Sigmoid colon (tissue), 7 donors: ENCODE measurements at regions of chr2 and their contacts with region 1.

Region 1: DNA sequence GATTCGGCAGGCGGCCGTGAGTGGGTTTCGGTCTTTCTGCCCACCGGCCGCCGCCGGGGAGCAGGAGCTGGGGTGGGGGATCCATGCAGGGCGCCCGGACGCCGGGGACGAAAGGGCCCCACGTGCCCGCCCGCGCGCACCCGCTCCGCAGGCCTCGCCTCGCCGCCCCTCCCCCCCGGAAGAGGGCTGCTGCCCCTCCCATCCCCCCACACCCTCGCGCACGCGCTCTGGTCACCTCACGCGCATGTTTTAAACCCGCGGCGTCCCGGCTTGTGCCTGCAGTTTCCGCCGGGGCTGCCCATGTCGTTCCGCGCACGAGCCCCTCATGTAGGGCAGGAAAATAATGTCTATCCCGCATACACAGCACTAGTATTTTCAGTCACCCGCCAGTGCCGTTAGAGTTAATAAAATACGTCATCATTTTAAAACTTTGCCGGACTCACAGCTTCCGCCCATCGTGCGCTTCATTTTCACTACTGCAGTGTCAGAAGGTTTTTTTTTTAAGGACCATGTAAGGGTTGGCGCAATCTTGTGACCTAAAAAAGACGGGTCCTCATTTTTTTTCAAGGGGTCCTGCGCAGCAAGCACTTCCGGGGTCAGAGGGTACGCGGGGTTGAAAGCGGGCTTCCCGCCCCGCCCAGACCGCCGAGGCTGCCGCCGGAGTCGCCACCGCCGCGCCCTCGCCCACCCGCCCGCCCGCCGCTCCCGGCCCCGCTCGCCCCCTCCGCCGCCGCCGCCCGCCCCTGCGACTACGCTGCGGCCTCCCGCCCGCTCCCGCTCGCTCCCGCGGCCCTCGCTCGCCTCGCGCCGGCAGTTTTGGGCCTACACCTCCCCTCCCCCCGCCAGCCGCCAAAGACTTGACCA is at the start of gene PCBP1:
- DNase-seq: peak; percentile 98
- H3K4me3 ChIP-seq: peak within 1 kb of the TSS; percentile 63 to 87 (median 72)
- H3K27ac ChIP-seq: peak within 1 kb of the TSS; percentile 99 to 100 (median 99)
- H3K4me1 ChIP-seq: peaks cover 0 to 54% (median 47%) of the 10 kb centered on the region in 4 donors
- H3K27me3 ChIP-seq: no peaks in the 10 kb centered on the region
- CTCF ChIP-seq: no peak
- EP300 ChIP-seq: peak in 2 of 4 donors; percentile 22 to 28
- POLR2A ChIP-seq: peak; percentile 91 to 95
- total RNA-seq, gene PCBP1: 178 to 186 (median 182) TPM

Region 2: DNA sequence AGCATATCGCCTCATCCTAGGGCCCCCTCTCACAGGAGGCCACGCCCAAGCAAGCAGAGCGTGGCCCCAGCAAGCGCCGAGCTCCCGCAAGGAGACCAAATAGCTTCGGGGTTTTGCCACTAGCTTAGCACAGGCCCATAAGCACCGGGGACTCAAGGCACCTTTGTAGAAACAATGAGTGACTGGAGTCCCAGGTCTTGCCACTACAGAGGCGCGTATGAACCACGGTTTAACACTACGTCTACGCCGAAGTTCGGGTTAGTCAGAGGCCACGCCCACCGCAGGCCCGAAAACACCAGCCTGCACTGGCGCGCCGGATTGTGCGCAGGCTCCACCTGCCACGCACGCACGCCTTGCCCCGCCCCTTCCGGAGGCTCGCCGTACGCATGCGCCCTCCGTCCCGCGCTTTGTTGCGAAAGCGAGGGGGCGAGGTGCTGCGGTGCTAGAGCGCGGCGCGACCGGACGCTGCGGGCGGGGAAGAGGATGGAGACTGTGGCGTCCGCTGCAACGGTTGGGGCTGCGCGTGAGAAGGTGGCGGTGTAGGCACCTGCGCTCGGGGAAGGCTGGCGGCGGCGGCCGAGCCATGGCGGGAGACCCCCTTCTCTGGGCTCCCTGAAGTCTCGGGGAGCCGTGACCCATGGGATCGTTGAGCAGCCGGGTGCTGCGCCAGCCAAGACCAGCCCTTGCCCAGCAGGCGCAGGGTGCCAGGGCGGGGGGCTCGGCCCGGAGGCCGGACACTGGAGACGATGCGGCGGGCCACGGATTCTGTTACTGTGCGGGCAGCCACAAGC is 257.6 kb before region 1 on chr2 and contains the start of gene GMCL1:
- intact Hi-C with region 1: loop called (anchors 10 kb)
- DNase-seq: peak; percentile 99
- H3K4me3 ChIP-seq: peak within 1 kb of the TSS; percentile 86 to 94 (median 88)
- H3K27ac ChIP-seq: peak within 1 kb of the TSS; percentile 90 to 95 (median 94)
- H3K4me1 ChIP-seq: peaks cover 0 to 31% (median 23%) of the 10 kb centered on the region in 4 donors
- H3K27me3 ChIP-seq: no peaks in the 10 kb centered on the region
- CTCF ChIP-seq: no peak
- EP300 ChIP-seq: peak in 1 of 4 donors; percentile 40
- POLR2A ChIP-seq: peak; percentile 62 to 68
- total RNA-seq, gene GMCL1: 10.5 to 15.3 (median 12.9) TPM

Region 3: GRCh38 chr2:70043252-70043875 is 43.7 kb before region 1 on chr2:
- intact Hi-C with region 1: no loop called
- DNase-seq: no peak
- H3K4me3 ChIP-seq: no peak overlapping the region
- H3K27ac ChIP-seq: no peak overlapping the region
- H3K4me1 ChIP-seq: no peaks in the 10 kb centered on the region
- H3K27me3 ChIP-seq: no peaks in the 10 kb centered on the region
- CTCF ChIP-seq: no peak
- EP300 ChIP-seq: peak in 2 of 4 donors; percentile 55 to 72
- POLR2A ChIP-seq: no peak

Region 4: GRCh38 chr2:70124983-70125480 is 38.0 kb after region 1 on chr2:
- intact Hi-C with region 1: loop called (anchors 2 kb)
- DNase-seq: peak; percentile 86
- H3K4me3 ChIP-seq: peak overlapping the region; percentile 54 to 65 (median 56)
- H3K27ac ChIP-seq: peak overlapping the region; percentile 94 to 97 (median 96)
- H3K4me1 ChIP-seq: peaks cover 0 to 26% (median 16%) of the 10 kb centered on the region in 4 donors
- H3K27me3 ChIP-seq: no peaks in the 10 kb centered on the region
- CTCF ChIP-seq: no peak
- EP300 ChIP-seq: peak in 1 of 4 donors; percentile 26
- POLR2A ChIP-seq: peak in 1 of 2 donors; percentile 18

Region 5: DNA sequence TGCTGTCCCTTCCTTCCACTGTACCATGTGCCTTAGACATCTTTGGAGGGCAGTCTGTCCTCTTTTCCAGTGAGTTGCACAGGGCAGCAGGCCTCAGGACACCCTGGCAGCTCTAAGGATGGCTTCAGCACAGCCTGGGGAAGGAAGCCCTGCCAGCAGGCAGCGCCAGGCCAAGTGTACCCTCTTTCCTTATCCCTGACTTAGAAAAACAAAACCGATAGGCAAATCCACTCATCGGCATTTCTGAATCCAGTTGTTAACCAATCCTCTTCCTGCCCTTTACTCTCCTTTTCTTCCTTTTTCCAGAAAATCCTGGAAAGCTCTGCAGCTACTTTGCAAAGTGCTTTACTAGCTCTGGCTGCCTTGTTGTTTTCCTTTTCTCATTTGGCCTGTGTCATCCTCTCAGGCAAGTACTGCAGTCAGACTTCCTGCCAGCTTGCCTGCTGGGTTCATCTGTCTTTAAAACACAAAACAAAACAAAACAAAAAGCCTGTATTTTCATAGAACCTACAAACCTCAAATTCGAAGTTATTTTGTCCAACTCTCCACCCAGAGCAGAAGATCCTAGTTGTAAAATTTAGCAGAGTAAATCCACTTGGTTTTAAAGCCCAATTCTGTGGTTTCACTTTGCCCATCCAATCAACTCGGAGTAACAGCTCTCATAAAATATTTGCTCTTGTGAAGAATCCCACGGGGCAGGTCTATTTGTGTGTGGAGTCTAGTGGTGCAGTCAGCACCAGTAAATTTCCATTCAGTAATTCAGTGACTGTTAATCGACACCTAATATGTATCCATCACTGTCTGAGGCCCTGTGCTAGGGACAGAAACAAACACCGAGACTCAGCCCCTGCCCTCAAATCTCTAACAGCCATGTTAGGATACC is 45.4 kb after region 1 on chr2:
- intact Hi-C with region 1: loop called (anchors 2 kb)
- DNase-seq: no peak
- H3K4me3 ChIP-seq: peak overlapping the region; percentile 9 to 40 (median 36)
- H3K27ac ChIP-seq: peak overlapping the region; percentile 84 to 90 (median 89)
- H3K4me1 ChIP-seq: peaks cover 0 to 42% (median 33%) of the 10 kb centered on the region in 4 donors
- H3K27me3 ChIP-seq: no peaks in the 10 kb centered on the region
- CTCF ChIP-seq: no peak
- EP300 ChIP-seq: no peak
- POLR2A ChIP-seq: peak in 1 of 2 donors; percentile 12

Region 6: DNA sequence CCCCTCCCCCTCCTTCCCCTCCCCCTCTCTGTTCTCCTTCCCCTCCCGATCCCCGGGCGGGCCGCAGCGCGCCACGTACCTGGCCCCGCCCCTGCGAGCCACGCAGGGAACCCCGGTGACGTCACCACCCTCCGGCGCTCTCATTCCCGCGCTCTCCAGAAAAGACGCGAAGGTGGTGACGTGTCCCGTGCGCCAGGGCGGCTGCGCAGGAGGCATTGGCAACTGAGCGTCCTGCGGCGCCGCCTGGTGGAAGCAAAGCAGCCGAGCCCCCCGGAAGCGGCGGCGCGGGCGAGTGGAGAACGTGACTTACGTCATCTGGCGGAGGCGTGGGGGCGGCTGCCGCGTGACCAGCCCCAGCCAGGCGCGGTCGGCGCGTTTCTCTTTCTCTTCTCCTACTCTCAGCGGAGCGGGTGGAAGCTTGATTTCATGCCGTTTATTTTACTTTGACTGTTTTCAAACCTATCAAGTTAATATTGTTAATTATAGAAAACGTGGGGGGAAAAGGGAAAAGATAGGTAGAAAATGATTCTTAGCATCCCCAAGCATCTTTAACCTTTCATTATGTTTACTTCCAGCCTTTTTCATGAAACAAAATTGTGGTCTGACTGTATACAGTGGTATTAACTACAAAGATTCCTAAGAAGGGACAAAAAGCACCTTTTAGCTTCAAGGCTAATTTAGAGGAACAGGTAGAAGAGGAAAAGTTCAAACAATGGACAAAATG is 55.7 kb after region 1 on chr2:
- intact Hi-C with region 1: loop called (anchors 1 kb)
- DNase-seq: peak; percentile 100
- H3K4me3 ChIP-seq: peak overlapping the region; percentile 56 to 78 (median 72)
- H3K27ac ChIP-seq: peak overlapping the region; percentile 97 to 100 (median 99)
- H3K4me1 ChIP-seq: peaks cover 0 to 24% (median 20%) of the 10 kb centered on the region in 4 donors
- H3K27me3 ChIP-seq: no peaks in the 10 kb centered on the region
- CTCF ChIP-seq: peak; percentile 85 to 100 (median 98)
- EP300 ChIP-seq: peak in 3 of 4 donors; percentile 52 to 95 (median 74)
- POLR2A ChIP-seq: peak; percentile 92 to 94

Region 7: GRCh38 chr2:70190418-70191243 is 103.6 kb after region 1 on chr2 and contains the start of gene C2orf42:
- intact Hi-C with region 1: loop called (anchors 5 kb)
- DNase-seq: peak; percentile 98
- H3K4me3 ChIP-seq: peak within 1 kb of the TSS; percentile 77 to 91 (median 81)
- H3K27ac ChIP-seq: peak within 1 kb of the TSS; percentile 95 to 98 (median 96)
- H3K4me1 ChIP-seq: peaks cover 0 to 11% (median 5%) of the 10 kb centered on the region in 4 donors
- H3K27me3 ChIP-seq: no peaks in the 10 kb centered on the region
- CTCF ChIP-seq: no peak
- EP300 ChIP-seq: peak in 1 of 4 donors; percentile 18
- POLR2A ChIP-seq: peak; percentile 98 to 99
- total RNA-seq, gene C2orf42: 8.8 to 24.3 (median 21.8) TPM

Region 8: GRCh38 chr2:70258532-70258874 is 171.4 kb after region 1 on chr2:
- intact Hi-C with region 1: loop called (anchors 10 kb)
- DNase-seq: peak; percentile 90
- H3K4me3 ChIP-seq: peak overlapping the region; percentile 70 to 92 (median 76)
- H3K27ac ChIP-seq: peak overlapping the region; percentile 88 to 95 (median 91)
- H3K4me1 ChIP-seq: peaks cover 0 to 40% (median 34%) of the 10 kb centered on the region in 4 donors
- H3K27me3 ChIP-seq: no peaks in the 10 kb centered on the region
- CTCF ChIP-seq: no peak
- EP300 ChIP-seq: no peak
- POLR2A ChIP-seq: no peak